Activated B cell treated with CpG ODN at 0.5 μM for 24 hours (primary cell): ENCODE measurements at regions of chr13 and their contacts with region 1.

Region 1: DNA sequence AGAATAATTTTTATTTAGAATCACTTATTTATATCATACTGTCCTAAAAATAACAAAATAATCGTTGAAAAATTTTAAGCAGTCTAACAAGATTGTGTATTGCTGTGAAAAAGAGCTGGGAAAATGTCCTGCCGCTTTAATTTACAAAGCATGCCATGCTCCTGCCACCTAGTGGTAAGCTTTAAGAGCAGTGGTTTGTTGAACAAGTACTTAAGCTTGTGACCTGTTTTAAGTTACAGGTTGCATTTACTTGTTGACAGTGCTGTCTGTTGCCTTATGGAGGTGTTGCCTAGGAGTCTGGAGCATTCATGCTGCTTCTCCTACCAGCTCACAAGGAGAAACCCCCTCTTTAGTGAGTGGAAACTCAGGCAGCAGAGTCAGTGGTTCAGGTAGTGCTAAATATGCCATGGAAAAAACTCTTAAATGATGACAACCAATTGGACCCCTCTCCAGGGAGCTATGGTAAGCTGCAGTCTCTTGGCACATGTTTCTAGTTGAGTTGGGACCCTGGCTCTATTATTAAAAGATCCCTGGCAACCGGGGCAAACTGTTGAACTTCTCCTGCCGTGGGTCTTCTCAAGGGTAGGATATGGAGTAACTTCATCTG is 68.4 kb downstream of the SPATA13 start:
- DNase-seq: no peak
- ATAC-seq: peak; percentile 58
- H3K4me3 Mint-ChIP-seq: no peak overlapping the region
- H3K27ac Mint-ChIP-seq: no peak overlapping the region
- H3K4me1 Mint-ChIP-seq: peaks cover 27% of the 10 kb centered on the region
- H3K27me3 Mint-ChIP-seq: no peaks in the 10 kb centered on the region
- CTCF ChIP-seq: peak; percentile 99

Region 2: GRCh38 chr13:24020375-24020830 is 208.6 kb before region 1 on chr13:
- CTCF ChIA-PET with region 1: interaction called, 15 read pairs
- POLR2A ChIA-PET with region 1: no interaction called
- intact Hi-C with region 1: loop called (anchors 1 kb)
- DNase-seq: no peak
- ATAC-seq: no peak
- H3K4me3 Mint-ChIP-seq: no peak overlapping the region
- H3K27ac Mint-ChIP-seq: no peak overlapping the region
- H3K4me1 Mint-ChIP-seq: no peaks in the 10 kb centered on the region
- H3K27me3 Mint-ChIP-seq: no peaks in the 10 kb centered on the region
- CTCF ChIP-seq: no peak